ENCODE measurements at regions of chr6 and their contacts with region 1.

Region 1: GRCh38 chr6:168370310-168370991 is 50.9 kb upstream of the DACT2 start:
- DNase-seq: peak; percentile 77 to 90 (median 90)
- ATAC-seq: peak; percentile 88
- H3K4me3 ChIP-seq: no peak overlapping the region
- H3K4me1 ChIP-seq: no peaks in the 10 kb centered on the region
- CTCF ChIP-seq: peak; percentile 77

Region 2: DNA sequence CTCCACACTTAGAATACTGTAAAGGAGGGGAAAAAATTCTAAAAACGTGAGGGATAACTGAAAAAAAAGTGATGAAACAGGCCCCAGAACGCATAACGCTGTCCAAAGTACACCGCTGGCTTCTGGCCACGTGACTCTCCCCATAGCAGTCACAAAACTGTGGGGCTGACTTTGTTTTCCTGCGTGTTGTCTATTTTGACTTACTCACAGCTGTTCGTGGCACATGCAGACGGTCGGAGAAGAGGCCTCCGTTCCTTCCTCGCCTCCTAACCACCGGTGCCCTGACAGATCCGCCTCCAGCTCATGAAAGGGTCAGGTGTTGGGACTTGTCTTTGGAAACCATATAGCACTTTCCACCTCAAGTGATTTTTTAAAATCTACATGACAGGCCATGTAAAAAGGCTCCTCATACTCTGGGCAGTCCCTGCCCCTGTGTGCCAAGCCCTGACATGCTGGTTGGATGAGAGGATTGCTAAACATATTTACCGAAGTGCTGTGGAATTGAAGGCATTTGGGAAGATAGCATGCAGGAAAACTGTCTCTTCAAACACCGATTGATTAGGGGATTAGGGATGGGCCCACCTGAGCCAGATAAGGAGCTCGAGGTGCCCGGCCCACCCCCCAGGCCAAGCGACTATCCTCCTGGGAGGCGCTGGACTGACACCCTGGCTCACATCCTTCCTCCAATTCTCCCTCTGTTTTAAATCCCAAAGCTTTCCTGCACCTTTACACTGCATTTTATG is 105.7 kb before region 1 on chr6:
- intact Hi-C with region 1: no loop called
- DNase-seq: peak in 1 of 3 donors; percentile 67
- ATAC-seq: no peak
- H3K4me3 ChIP-seq: no peak overlapping the region
- H3K4me1 ChIP-seq: peaks cover 26% of the 10 kb centered on the region
- CTCF ChIP-seq: no peak

Region 3: GRCh38 chr6:168884646-168885086 is 514.2 kb after region 1 on chr6:
- intact Hi-C with region 1: loop called (anchors 2 to 5 kb)
- DNase-seq: peak in 2 of 3 donors; percentile 83 to 86
- ATAC-seq: peak; percentile 92
- H3K4me3 ChIP-seq: no peak overlapping the region
- H3K4me1 ChIP-seq: no peaks in the 10 kb centered on the region
- CTCF ChIP-seq: peak; percentile 92